Heart right ventricle (tissue), 16 donors: ENCODE measurements at regions of chr9 and their contacts with region 1.

Region 1: GRCh38 chr9:1794547-1795270 is 220.4 kb upstream of the SMARCA2 start:
- DNase-seq: no peak
- ATAC-seq: no peak
- H3K4me3 ChIP-seq: no peak overlapping the region
- H3K27ac ChIP-seq: no peak overlapping the region
- H3K4me1 ChIP-seq: no peaks in the 10 kb centered on the region
- H3K27me3 ChIP-seq: no peaks in the 10 kb centered on the region
- CTCF ChIP-seq: no peak

Region 2: GRCh38 chr9:1332156-1332555 is 462.6 kb before region 1 on chr9:
- intact Hi-C with region 1: no loop called
- DNase-seq: no peak
- ATAC-seq: no peak
- H3K4me3 ChIP-seq: no peak overlapping the region
- H3K27ac ChIP-seq: no peak overlapping the region
- H3K4me1 ChIP-seq: no peaks in the 10 kb centered on the region
- H3K27me3 ChIP-seq: peaks cover 0 to 3% (median 0%) of the 10 kb centered on the region in 7 donors
- CTCF ChIP-seq: no peak

Region 3: GRCh38 chr9:1747417-1747967 is 47.2 kb before region 1 on chr9:
- intact Hi-C with region 1: loop called in 1 of 10 experiments (anchors 5 kb)
- DNase-seq: no peak
- ATAC-seq: no peak
- H3K4me3 ChIP-seq: no peak overlapping the region
- H3K27ac ChIP-seq: no peak overlapping the region
- H3K4me1 ChIP-seq: no peaks in the 10 kb centered on the region
- H3K27me3 ChIP-seq: no peaks in the 10 kb centered on the region
- CTCF ChIP-seq: no peak

Region 4: GRCh38 chr9:1857808-1858207 is 63.1 kb after region 1 on chr9:
- intact Hi-C with region 1: loop called in 1 of 10 experiments (anchors 10 kb)
- DNase-seq: no peak
- ATAC-seq: no peak
- H3K4me3 ChIP-seq: no peak overlapping the region
- H3K27ac ChIP-seq: no peak overlapping the region
- H3K4me1 ChIP-seq: no peaks in the 10 kb centered on the region
- H3K27me3 ChIP-seq: peaks cover 0 to 11% (median 0%) of the 10 kb centered on the region in 7 donors
- CTCF ChIP-seq: no peak